ENCODE measurements at regions of chr3 and their contacts with region 1.

Region 1: DNA sequence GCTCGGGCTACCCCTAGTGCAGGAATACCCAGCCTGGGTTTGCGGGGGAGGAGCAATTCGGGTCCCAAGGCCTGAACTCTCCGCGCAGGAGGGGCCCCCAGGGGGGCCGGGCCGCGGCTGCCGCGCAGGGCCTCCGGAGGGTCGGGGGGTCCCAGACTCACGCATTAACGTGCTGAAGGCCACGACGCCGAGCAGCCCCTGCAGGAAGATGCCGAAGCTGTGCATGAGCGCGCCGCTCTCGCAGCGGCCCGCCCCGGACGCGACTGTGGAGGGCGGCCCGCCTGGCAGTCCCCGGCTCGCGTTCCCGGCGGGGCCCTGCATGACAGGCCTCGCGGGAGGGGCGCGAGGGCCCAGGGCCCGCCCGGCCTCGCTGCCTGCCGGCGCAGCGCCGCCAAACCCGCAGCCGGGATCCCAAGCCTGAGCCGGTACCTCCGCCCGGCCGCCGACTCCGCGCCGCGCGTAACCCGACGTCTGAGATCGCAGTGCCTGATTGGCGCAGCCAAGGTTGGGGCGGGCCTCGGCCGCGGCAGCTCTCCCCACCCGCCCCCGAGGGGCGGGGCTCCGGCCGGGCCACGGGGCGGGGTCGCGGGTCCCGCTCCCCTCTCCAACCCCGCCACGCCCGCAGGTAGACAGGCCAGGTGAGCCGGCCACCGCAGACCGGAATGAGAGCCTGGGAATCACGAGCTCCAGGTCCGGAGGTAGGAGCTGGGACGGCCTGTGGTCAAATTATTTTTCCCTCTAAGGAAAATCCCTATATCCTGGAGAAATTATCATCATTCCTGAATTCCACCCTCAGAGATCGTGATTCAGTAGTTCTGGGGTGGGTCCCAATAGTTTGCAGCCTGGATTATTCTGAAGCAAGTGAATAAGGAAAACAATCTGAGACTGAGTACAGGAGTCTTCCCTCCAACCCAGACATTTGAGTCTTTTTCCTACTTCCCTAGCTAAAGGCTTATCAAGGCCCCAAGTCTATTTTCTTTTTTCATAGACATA is at the start of gene STIMATE:
- DNase-seq: peak; percentile 89
- H3K4me3 Mint-ChIP-seq: peak within 1 kb of the TSS; percentile 89
- H3K27ac Mint-ChIP-seq: peak within 1 kb of the TSS; percentile 61
- H3K4me1 Mint-ChIP-seq: peaks cover 49% of the 10 kb centered on the region
- H3K27me3 Mint-ChIP-seq: no peaks in the 10 kb centered on the region
- total RNA-seq, gene STIMATE: 13.0 to 18.3 TPM

Region 2: DNA sequence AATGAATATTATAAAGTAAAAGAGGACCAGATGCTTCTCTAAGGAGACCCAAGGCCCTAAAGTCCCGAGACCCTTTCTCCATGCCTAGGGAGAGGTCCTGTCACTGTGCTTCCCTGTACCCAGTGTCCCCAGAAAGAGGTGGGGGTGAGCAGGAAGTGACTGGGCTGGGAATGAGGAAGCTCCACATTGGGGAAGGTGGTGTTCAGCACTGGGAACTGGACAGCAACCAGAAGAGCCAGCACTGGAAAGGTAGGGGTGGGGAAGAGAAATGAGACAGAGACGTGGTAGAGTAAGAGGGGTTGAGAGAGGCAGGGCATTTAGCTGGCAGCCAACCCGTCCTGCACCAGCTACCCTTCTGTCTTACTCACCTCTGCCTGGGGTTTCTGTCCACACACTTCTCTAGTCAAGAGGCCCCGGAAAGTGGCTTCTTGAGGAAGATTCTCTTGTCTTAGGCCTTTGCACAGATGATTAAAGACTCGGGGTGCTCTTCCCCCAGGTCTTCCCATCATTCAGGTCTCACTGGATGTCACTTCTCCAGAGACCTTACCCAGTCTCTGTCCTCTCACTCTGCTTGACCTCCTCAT is 967.9 kb before region 1 on chr3:
- CTCF ChIA-PET with region 1: no interaction called
- POLR2A ChIA-PET with region 1: no interaction called
- intact Hi-C with region 1: no loop called
- DNase-seq: no peak
- H3K4me3 Mint-ChIP-seq: no peak overlapping the region
- H3K27ac Mint-ChIP-seq: no peak overlapping the region
- H3K4me1 Mint-ChIP-seq: no peaks in the 10 kb centered on the region
- H3K27me3 Mint-ChIP-seq: no peaks in the 10 kb centered on the region

Region 3: DNA sequence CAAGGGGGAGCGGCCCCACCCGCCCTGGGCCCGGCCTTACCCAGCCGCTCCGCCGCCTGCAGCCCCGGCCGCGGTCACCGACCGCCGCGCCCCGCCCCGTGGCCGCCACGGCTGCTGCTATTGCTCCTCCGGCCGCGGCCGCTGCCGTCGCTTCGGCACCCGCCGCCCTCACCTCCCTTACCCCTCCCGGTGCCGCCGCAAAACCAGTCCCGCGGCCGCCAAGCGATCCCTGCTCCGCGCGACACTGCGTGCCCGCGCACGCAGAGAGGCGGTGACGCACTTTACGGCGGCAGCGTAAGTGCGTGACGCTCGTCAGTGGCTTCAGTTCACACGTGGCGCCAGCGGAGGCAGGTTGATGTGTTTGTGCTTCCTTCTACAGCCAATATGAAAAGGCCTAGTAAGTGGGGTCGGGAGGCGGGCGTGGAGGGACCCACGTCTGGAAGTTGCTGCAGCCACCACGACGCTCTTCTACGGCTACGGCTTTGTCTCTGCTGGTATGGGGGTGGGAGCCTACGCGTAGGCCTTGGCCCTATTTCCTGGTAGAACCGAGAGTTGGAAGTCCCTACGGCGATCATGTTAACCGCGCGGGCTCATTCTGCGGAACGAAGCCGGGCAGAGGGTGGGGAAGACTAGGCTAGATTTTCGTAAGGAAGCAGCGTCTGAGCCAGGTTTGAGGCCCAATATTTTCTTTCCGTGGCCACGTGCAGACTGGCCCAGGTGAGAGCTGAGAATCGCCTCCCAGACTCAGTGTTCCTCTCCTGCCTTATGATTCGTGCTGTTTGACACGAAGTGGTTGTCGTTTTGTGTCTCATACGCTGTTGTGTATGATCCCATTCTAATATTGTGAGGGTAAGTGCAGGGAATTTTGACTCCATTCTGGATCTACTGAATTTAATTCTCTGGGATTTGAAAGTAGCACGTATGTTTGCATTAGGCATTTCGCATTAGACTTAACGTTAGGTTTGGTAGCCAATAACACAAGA is 211.4 kb before region 1 on chr3 and contains the starts of genes GNL3 and PBRM1:
- CTCF ChIA-PET with region 1: interaction called, 6 read pairs
- POLR2A ChIA-PET with region 1: no interaction called
- intact Hi-C with region 1: loop called (anchors 5 kb)
- DNase-seq: peak; percentile 96
- H3K4me3 Mint-ChIP-seq: peak within 1 kb of the TSS; percentile 91
- H3K27ac Mint-ChIP-seq: peak within 1 kb of the TSS; percentile 96
- H3K4me1 Mint-ChIP-seq: peaks cover 72% of the 10 kb centered on the region
- H3K27me3 Mint-ChIP-seq: no peaks in the 10 kb centered on the region
- total RNA-seq, gene GNL3: 167 to 172 TPM
- total RNA-seq, gene PBRM1: 52.3 to 59.2 TPM

Region 4: GRCh38 chr3:52880474-52880873 is 17.0 kb before region 1 on chr3:
- CTCF ChIA-PET with region 1: interaction called, 46 read pairs
- POLR2A ChIA-PET with region 1: interaction called, 4 read pairs
- intact Hi-C with region 1: no loop called
- DNase-seq: peak; percentile 31
- H3K4me3 Mint-ChIP-seq: no peak overlapping the region
- H3K27ac Mint-ChIP-seq: no peak overlapping the region
- H3K4me1 Mint-ChIP-seq: peaks cover 18% of the 10 kb centered on the region
- H3K27me3 Mint-ChIP-seq: no peaks in the 10 kb centered on the region

Region 5: DNA sequence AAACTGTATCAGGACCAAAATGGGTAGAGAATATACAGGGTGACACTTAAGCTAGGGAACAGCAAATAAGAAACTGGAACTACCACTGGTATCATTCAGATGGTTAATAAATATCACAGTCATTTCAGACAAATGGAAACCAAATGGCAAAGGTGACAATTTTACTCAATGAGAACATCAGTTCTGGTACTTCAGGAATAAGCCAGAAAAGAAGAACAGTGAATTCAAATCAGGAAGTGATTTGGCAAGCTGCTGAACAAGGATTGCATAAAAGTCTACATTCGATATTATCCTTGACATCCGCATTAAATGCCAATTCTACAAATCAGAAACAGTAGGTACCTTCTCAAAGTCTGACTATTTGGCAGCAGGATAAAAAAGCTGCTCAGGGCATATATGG is 23.4 kb after region 1 on chr3:
- CTCF ChIA-PET with region 1: no interaction called
- POLR2A ChIA-PET with region 1: no interaction called
- intact Hi-C with region 1: no loop called
- DNase-seq: no peak
- H3K4me3 Mint-ChIP-seq: no peak overlapping the region
- H3K27ac Mint-ChIP-seq: no peak overlapping the region
- H3K4me1 Mint-ChIP-seq: peaks cover 6% of the 10 kb centered on the region
- H3K27me3 Mint-ChIP-seq: no peaks in the 10 kb centered on the region

Region 6: DNA sequence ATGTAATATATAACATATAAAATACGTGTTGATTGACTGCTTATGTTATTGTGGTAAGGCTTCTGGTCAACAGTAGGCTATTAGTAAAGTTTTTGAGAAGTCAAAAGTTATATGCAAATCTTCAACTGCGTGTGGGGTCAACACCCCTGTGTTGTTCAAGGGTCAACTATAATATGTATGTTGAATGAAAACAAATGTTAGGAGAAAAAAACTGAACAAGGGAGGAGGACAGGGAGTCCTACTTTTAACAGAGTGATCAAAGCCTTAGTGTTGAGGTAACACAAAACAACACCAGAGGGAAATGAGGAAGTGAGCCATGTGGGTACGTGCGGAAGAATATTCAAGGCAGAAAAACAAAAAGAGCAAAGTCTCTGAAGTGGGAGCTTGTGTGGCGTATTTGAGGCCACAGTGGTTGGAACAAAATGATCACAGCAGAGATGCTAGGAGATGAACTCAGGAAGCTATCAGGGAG is 85.9 kb after region 1 on chr3:
- CTCF ChIA-PET with region 1: interaction called, 3 read pairs
- POLR2A ChIA-PET with region 1: interaction called, 3 read pairs
- intact Hi-C with region 1: loop called (anchors 1 kb)
- DNase-seq: peak; percentile 86
- H3K4me3 Mint-ChIP-seq: peak overlapping the region; percentile 16
- H3K27ac Mint-ChIP-seq: peak overlapping the region; percentile 72
- H3K4me1 Mint-ChIP-seq: peaks cover 38% of the 10 kb centered on the region
- H3K27me3 Mint-ChIP-seq: no peaks in the 10 kb centered on the region

Region 7: DNA sequence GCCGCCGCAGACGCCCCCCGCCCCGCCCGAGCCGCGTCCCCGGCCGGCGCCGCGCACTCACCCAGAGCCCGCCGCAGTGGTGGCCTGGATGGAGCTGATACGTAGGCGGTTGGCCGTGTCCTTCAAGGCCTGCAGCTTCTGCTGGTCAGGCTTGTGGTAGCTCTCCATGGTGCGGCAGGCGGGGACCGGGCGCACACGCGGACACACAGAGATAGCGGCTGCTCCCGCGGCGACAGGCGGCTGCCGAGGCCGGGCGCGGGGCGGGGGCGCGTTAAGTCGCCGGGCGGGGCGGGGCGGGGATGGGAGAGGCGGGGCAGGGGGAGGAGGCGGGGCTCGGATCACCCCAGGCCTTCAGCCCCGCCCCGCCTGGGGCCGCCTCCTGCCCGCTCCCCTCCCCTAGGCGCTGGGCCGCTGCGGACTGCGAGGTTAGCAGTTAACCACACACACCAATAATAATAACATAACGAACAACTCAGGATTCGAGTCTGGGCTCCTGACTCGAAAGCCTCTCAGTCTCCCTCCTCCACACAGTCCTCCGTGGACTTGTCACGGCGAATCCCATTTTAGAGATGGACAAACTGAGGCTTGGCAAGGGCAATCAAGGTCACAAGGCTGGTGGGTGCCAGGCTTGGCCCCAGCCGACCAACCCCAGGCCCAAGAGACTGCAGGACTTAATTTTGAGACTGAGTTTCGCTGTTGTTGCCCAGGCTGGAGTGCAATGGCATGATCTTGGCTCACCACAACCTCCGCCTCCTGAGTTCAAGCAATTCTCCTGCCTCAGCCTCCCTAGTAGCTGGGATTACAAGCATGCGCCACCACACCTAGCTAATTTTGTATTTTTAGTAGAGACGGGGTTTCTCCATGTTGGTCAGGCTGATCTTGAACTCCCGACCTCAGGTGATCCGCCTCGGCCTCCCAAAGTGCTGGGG is 358.6 kb after region 1 on chr3 and contains the start of gene TKT:
- CTCF ChIA-PET with region 1: no interaction called
- POLR2A ChIA-PET with region 1: no interaction called
- intact Hi-C with region 1: loop called (anchors 10 kb)
- DNase-seq: peak; percentile 88
- H3K4me3 Mint-ChIP-seq: peak within 1 kb of the TSS; percentile 94
- H3K27ac Mint-ChIP-seq: peak within 1 kb of the TSS; percentile 78
- H3K4me1 Mint-ChIP-seq: peaks cover 27% of the 10 kb centered on the region
- H3K27me3 Mint-ChIP-seq: no peaks in the 10 kb centered on the region
- total RNA-seq, gene TKT: 252 to 254 TPM